GM12878 (cell line): ENCODE measurements at regions of chr7 and their contacts with region 1.

Region 1: GRCh38 chr7:7103343-7104313 is 78.7 kb upstream of the C1GALT1 start:
- DNase-seq: peak; percentile 7
- ATAC-seq: peak; percentile 88
- H3K4me3 ChIP-seq: no peak overlapping the region
- H3K27ac ChIP-seq: no peak overlapping the region
- H3K4me1 ChIP-seq: no peaks in the 10 kb centered on the region
- H3K27me3 ChIP-seq: no peaks in the 10 kb centered on the region
- CTCF ChIP-seq: peak; percentile 49 to 69 (median 56); a peak in 5 of 6 replicates
- EP300 ChIP-seq: no peak
- POLR2A ChIP-seq: no peak
- RAD21 ChIP-seq: peak; percentile 81

Region 2: DNA sequence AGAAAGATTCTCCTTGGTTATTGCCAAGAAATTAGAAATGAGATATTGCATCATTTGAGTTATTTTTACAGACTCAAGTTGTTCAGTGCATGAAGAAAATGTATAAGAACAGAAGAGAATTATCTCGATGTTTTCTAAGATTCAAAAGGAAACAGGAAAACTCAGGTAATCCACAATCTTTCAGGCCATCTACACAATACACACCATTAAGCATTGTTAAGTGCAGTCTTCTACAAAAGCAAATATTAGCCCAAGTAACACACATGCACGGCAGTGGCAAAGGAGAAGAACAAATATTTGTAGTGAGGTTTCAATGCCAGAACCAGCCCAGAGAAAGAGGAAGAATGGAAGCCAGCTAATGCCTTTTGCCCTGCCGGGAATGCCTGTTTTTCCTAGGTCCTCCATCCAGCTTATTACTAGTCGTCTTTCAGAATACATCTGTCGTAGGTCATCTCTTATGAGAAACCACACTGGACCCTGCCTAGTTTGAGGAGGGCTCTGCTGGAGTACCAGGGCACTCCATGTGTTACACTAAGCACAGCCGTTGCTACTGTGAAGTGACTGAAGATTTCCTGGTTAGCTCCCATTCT is 11.2 kb after region 1 on chr7:
- CTCF ChIA-PET with region 1: interaction called, 29 read pairs
- POLR2A ChIA-PET with region 1: no interaction called
- RAD21 ChIA-PET with region 1: no interaction called
- SMC1A ChIA-PET with region 1: interaction called, 5 read pairs
- in situ Hi-C with region 1: no loop called
- intact Hi-C with region 1: no loop called
- DNase-seq: no peak
- ATAC-seq: no peak
- H3K4me3 ChIP-seq: no peak overlapping the region
- H3K27ac ChIP-seq: no peak overlapping the region
- H3K4me1 ChIP-seq: no peaks in the 10 kb centered on the region
- H3K27me3 ChIP-seq: no peaks in the 10 kb centered on the region
- CTCF ChIP-seq: no peak
- EP300 ChIP-seq: no peak
- POLR2A ChIP-seq: no peak
- RAD21 ChIP-seq: no peak

Region 3: DNA sequence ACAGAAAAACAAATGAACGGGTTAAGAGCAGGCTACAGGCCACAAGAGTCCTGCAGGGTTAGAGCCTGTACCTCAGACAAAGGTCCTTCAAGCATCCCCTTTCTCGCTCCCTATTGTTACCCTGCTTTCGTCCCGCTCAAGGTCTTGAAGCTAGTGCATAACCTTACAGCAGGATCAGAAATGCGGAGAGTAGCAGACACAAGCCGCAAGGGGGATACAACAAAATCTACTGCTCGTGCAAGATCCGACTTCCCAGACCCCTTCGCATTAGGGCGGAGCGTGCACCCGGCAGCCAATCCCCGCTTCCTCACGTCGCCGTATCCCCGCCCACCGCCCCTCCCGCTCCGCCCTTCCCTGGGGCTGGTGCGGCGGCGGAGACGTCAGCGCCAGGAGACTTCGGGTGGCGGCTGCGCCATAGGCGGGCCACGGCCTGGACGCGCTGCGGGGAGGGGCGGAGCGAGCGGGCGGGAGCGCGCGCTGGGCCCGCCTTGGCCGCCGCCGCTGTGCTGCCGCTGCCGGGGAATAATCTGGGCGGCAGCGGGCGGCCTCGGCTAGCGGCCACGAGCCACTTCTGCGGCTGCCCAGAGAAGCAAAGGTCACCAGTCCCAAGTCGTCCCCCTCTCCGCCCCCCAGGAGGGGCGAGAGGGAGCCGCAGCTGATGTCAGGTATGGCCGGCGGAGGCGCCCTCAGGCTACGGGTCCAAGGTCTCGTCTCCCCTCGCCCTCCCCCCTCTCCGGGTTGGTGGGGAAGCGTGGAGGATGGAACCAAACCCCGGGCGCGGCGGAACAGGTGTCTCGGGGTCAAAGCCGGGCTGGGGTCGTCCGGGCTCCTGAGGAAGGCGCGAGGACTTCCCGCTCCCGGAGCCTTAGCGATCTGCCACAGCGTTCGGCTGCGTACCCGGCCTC is 78.8 kb after region 1 on chr7 and contains the start of gene C1GALT1:
- CTCF ChIA-PET with region 1: interaction called, 8 read pairs
- POLR2A ChIA-PET with region 1: no interaction called
- RAD21 ChIA-PET with region 1: interaction called, 9 read pairs
- SMC1A ChIA-PET with region 1: interaction called, 9 read pairs
- in situ Hi-C with region 1: no loop called
- intact Hi-C with region 1: loop called (anchors 2 kb)
- DNase-seq: peak; percentile 92
- ATAC-seq: peak; percentile 90
- H3K4me3 ChIP-seq: peak within 1 kb of the TSS; percentile 95
- H3K27ac ChIP-seq: peak within 1 kb of the TSS; percentile 96
- H3K4me1 ChIP-seq: peaks cover 9% of the 10 kb centered on the region
- H3K27me3 ChIP-seq: no peaks in the 10 kb centered on the region
- CTCF ChIP-seq: peak; percentile 44 to 55 (median 48)
- EP300 ChIP-seq: 0 out of 4 replicates have a peak, but pooled peaks of 1 of the 2 experiments have one; percentile 5
- POLR2A ChIP-seq: peak; percentile 81
- RAD21 ChIP-seq: peak; percentile 57
- polyA plus RNA-seq, gene C1GALT1: 1.6 to 2.7 TPM

Region 4: DNA sequence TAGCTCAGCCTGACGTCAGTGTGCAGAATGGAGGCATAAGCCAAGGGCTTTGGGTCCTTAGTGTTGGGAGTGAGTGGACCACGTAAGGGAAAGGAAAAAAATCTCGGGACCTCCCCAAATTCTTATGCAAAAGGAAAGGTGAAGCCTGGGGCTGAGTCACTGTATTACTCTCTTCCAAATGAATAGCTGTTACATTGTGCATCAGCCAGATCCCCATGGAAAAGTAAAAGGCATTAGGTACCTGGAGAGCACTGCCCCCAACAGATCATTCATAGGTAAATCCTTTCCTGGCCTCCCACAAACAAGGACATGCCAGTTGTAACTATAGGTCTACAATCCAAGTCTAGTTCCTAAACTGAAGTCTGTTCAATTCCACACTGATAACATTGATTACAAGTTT is 249.2 kb after region 1 on chr7:
- CTCF ChIA-PET with region 1: interaction called, 16 read pairs
- POLR2A ChIA-PET with region 1: no interaction called
- RAD21 ChIA-PET with region 1: interaction called, 4 read pairs
- SMC1A ChIA-PET with region 1: interaction called, 3 read pairs
- in situ Hi-C with region 1: no loop called
- intact Hi-C with region 1: no loop called
- DNase-seq: no peak
- ATAC-seq: no peak
- H3K4me3 ChIP-seq: no peak overlapping the region
- H3K27ac ChIP-seq: no peak overlapping the region
- H3K4me1 ChIP-seq: no peaks in the 10 kb centered on the region
- H3K27me3 ChIP-seq: no peaks in the 10 kb centered on the region
- CTCF ChIP-seq: peak in 1 of 3 experiments; percentile 16; a peak in 2 of 6 replicates
- EP300 ChIP-seq: no peak
- POLR2A ChIP-seq: no peak
- RAD21 ChIP-seq: peak; percentile 37

Region 5: DNA sequence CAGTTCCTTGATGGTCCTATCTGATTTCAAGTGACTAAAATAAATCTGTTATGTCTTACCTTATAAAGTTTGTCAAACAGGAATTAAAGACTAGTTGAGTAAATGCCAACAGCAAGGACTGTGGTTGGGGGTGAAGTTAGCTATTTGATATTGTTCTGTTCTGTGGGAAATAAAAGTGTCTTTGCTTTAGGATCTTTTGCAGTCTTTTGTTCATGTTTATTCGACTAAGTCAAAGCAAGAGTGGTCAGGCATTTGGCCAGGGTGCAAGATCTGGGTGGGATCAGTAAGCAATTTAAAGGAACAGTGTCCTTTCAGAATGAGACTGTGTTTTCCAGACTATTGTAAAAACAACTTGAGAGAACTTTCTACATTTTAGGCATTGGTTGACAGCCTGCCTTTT is 432.1 kb after region 1 on chr7 and contains the start of gene COL28A1:
- CTCF ChIA-PET with region 1: interaction called, 20 read pairs
- POLR2A ChIA-PET with region 1: no interaction called
- RAD21 ChIA-PET with region 1: interaction called, 11 read pairs
- SMC1A ChIA-PET with region 1: interaction called, 23 read pairs
- in situ Hi-C with region 1: loop called (anchors 5 kb)
- intact Hi-C with region 1: loop called (anchors 2 kb)
- DNase-seq: no peak
- ATAC-seq: no peak
- H3K4me3 ChIP-seq: no peak within 1 kb of the TSS
- H3K27ac ChIP-seq: no peak within 1 kb of the TSS
- H3K4me1 ChIP-seq: no peaks in the 10 kb centered on the region
- H3K27me3 ChIP-seq: no peaks in the 10 kb centered on the region
- CTCF ChIP-seq: no peak
- EP300 ChIP-seq: no peak
- POLR2A ChIP-seq: no peak
- RAD21 ChIP-seq: no peak
- polyA plus RNA-seq, gene COL28A1: not detected

Region 6: GRCh38 chr7:8217200-8218068 is 1113.8 kb after region 1 on chr7:
- CTCF ChIA-PET with region 1: interaction called, 7 read pairs
- POLR2A ChIA-PET with region 1: no interaction called
- RAD21 ChIA-PET with region 1: interaction called, 6 read pairs
- SMC1A ChIA-PET with region 1: interaction called, 7 read pairs
- in situ Hi-C with region 1: loop called (anchors 5 kb)
- intact Hi-C with region 1: loop called (anchors 5 kb)
- DNase-seq: peak; percentile 43
- ATAC-seq: peak; percentile 80
- H3K4me3 ChIP-seq: no peak overlapping the region
- H3K27ac ChIP-seq: no peak overlapping the region
- H3K4me1 ChIP-seq: no peaks in the 10 kb centered on the region
- H3K27me3 ChIP-seq: no peaks in the 10 kb centered on the region
- CTCF ChIP-seq: peak; percentile 42 to 67 (median 45); a peak in 4 of 6 replicates
- EP300 ChIP-seq: no peak
- POLR2A ChIP-seq: no peak
- RAD21 ChIP-seq: peak; percentile 81